Right ventricle myocardium superior (tissue), 1 donor: ENCODE measurements at regions of chr14 and their contacts with region 1.

Region 1: DNA sequence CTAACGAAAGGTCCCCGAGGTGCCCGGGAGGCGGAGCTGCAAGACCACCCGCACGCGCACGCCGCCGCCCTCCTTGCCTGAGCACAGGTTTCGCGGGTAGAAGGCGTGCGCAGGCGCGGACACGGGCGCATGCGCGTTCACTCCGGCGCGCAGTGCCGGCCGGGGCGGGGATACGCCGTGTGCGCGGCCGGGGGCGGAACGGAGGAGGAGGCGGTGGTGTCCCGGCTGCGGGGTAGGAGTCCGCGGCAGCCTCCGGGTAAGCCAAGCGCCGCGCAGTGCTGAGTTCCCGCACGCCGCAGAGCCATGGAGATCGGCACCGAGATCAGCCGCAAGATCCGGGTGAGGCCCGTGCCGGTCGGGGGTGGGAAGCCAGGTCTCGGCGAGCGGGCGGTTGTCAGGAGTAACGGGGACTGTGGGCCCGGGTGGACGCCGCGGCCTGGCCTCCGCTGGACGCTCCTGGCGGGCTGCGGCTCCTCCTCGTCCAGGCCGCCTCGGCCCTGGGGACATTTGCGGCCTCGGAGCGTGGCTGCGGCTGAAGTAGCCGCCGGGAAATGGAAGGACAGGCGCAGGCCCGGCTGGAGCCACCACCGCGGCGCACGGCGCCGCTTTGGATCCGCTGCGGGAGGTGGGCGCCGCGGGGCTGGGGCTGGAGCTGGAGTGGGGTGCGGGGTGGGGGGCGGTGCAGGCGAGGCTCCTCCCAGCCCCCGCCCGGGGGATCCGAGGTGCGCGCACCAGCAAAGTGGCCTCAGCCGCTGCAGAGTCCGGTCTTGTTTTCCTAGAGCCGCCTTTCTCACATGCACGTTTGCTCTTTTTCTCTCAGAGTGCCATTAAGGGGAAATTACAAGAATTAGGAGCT is at the start of gene ZC3H14:
- DNase-seq: peak; percentile 91
- ATAC-seq: peak; percentile 99
- total RNA-seq, gene ZC3H14: 36.6 TPM

Region 2: DNA sequence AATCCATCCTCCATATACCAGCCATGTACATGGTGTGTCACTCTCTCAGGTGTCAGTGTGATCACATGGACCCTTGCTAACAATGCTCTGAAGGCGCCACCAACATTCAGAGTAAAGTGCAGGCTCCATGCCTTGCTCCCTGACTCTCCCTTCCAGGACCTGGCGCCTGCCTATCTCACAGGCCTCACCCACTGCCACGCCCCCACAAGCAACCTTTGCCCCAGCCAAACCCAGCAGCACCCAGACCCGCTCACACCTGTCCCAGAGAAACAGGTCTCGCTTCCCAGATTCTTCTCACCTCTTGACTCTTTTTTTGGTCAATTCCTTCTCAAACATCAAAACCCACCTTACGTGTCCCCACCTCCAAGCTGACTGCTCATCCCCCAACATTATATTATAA is 292.3 kb before region 1 on chr14:
- intact Hi-C with region 1: no loop called
- DNase-seq: no peak
- ATAC-seq: peak; percentile 55

Region 3: DNA sequence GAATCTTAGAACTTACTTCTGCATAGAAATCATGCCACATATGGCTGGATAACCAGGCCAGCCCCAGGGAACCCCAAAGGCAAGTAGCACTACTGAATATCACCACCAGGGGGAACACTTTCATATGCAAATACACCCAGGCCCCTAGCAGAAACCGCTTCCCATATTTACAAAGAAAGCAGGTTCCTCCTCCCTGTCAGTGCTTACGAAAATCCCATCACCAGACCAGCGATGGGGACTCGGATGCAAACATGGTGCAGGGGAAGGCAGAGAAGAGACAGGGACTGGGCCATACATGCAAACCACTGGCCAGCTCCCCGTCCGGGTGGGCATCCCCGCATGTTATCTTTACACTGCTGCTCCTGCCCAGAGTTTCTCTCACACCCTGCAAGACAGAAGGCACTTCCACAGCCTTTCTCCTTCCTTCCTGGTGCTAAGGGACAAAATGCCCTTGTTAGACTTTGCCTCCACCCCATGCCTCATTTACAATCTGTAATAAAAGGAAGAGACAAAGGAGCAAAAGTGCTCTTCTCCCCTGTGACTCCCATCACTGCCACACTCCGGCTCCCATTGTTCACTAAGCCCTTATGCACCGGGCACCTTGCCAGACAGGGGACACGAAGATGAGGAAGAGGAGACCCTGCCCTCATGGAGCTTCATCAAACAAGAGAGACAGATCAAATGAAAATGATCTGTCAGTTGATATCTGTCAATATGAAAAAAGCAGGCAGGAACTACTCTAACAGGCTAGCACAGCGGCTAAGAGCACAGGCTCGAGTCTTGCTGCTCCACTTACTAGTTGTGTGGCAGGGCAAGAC is 70.6 kb before region 1 on chr14:
- intact Hi-C with region 1: loop called (anchors 5 kb)
- DNase-seq: no peak
- ATAC-seq: peak; percentile 81